ENCODE measurements at regions of chr9 and their contacts with region 1.

Region 1: GRCh38 chr9:115591584-115591984 is 473.6 kb upstream of the TNC start:
- DNase-seq: peak; percentile 5
- ATAC-seq: peak; percentile 66
- H3K4me3 ChIP-seq: no peak overlapping the region
- H3K27ac ChIP-seq: no peak overlapping the region
- H3K4me1 ChIP-seq: no peaks in the 10 kb centered on the region
- H3K27me3 ChIP-seq: no peaks in the 10 kb centered on the region
- CTCF ChIP-seq: peak; percentile 62 to 65 (median 65)
- EP300 ChIP-seq: no peak
- POLR2A ChIP-seq: no peak
- RAD21 ChIP-seq: peak; percentile 69

Region 2: DNA sequence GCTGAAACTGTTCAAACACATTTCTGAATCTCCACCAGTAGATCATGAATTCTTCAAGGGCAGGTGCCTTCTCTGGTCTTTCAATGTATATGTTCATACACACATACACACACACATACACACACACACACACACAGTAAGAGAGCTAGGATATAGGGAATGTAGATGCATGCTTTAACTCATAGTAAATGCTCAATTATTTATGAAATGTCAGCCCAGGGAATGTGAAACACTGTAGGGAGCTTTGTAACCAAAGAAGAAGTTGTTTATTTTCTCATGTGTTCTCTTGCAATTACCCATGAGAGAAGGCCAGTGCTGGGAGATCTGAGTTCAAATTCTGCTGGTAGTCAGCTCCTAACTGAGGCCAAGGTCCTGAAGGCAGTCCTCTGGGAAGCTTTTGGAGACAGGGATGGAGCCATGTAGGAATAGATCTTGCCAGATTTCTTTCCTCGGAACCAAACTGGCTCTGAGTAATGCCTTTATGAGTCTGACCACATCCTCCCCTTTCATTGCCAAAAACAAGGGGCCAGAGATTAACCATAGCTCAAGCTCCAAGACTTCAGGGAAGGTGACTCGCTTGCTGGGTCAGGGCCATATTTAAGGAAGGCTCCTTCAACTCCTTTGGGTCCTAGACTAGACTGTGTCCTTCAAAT is 13.4 kb after region 1 on chr9:
- CTCF ChIA-PET with region 1: interaction called, 26 read pairs
- POLR2A ChIA-PET with region 1: no interaction called
- RAD21 ChIA-PET with region 1: interaction called, 4 read pairs
- SMC1A ChIA-PET with region 1: interaction called, 4 read pairs
- in situ Hi-C with region 1: no loop called
- intact Hi-C with region 1: no loop called
- DNase-seq: no peak
- ATAC-seq: no peak
- H3K4me3 ChIP-seq: no peak overlapping the region
- H3K27ac ChIP-seq: no peak overlapping the region
- H3K4me1 ChIP-seq: no peaks in the 10 kb centered on the region
- H3K27me3 ChIP-seq: no peaks in the 10 kb centered on the region
- CTCF ChIP-seq: no peak
- EP300 ChIP-seq: no peak
- POLR2A ChIP-seq: no peak
- RAD21 ChIP-seq: no peak

Region 3: DNA sequence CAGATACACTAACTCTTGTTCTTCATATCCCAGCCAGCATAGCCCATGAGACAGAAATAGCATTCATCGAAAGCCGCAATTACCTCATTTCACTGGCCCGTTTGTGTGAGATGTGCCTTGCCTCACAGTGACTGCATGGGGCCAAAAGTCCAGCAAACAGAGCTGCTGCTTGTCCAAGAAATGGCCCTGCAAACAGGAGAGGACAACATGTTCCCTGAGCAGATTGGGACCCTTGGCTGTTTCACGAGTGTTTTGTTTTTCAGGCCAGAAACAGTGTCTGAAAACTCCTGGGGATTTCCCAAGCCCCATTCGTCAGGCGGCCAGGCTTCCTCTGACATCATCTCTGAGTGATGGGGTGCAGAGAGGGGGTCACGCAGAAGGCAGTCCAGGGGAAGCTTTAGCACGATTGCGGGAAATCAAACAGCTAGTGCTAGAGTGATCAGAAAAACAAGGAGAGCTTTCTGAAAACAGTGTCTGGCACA is 58.4 kb after region 1 on chr9:
- CTCF ChIA-PET with region 1: no interaction called
- POLR2A ChIA-PET with region 1: no interaction called
- RAD21 ChIA-PET with region 1: no interaction called
- SMC1A ChIA-PET with region 1: no interaction called
- in situ Hi-C with region 1: no loop called
- intact Hi-C with region 1: no loop called
- DNase-seq: no peak
- ATAC-seq: peak; percentile 72
- H3K4me3 ChIP-seq: no peak overlapping the region
- H3K27ac ChIP-seq: no peak overlapping the region
- H3K4me1 ChIP-seq: no peaks in the 10 kb centered on the region; the same call in 1 of the 2 replicates
- H3K27me3 ChIP-seq: no peaks in the 10 kb centered on the region
- CTCF ChIP-seq: no peak
- EP300 ChIP-seq: no peak
- POLR2A ChIP-seq: no peak
- RAD21 ChIP-seq: no peak

Region 4: GRCh38 chr9:116000748-116001329 is 409.3 kb after region 1 on chr9:
- CTCF ChIA-PET with region 1: no interaction called
- POLR2A ChIA-PET with region 1: no interaction called
- RAD21 ChIA-PET with region 1: no interaction called
- SMC1A ChIA-PET with region 1: no interaction called
- in situ Hi-C with region 1: no loop called
- intact Hi-C with region 1: loop called (anchors 10 kb)
- DNase-seq: no peak
- ATAC-seq: peak; percentile 80
- H3K4me3 ChIP-seq: no peak overlapping the region
- H3K27ac ChIP-seq: no peak overlapping the region
- H3K4me1 ChIP-seq: no peaks in the 10 kb centered on the region
- H3K27me3 ChIP-seq: no peaks in the 10 kb centered on the region
- CTCF ChIP-seq: peak in 2 of 3 experiments; percentile 40 to 48; a peak in 5 of 6 replicates
- EP300 ChIP-seq: no peak
- POLR2A ChIP-seq: no peak
- RAD21 ChIP-seq: 0 out of 2 replicates have a peak, but pooled peaks have one; percentile 16

Region 5: DNA sequence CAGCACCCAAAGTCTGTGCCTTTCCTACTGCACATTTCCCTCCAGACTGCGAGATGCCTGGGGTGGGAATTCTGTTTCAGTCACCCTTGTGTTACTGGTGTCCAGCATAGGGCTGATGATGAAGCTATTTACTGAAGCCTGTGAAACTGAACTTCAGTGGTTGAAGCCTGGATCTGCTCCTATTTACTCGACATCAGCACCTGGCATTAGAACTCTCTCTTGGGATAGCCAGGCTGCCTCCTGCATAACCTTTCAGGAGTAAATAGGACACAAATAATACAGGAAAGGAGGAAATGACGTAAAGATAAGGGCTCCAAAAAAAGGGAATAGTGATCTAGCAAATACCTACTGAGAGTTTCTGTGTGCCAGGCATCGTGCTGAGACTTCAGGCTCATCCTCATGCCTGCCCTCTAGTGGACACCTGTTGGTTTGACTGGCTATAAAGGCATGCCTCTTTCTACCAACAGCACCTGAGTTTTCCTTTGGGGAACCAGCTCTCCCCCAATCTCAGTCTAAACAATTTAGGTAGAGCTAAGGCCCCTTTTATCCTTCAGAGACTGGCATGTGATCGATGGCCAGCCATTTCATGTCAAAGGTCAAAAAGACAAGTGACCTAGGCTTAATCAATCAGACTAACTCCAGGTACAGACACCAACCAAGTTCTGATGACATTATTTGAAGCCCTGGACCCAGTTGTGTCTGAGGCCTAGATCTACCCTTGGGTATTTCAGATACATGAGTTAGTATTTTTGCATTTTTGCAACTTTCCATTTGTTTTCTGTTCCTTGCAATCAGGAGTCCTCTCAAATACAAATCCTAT is 903.4 kb after region 1 on chr9:
- CTCF ChIA-PET with region 1: no interaction called
- POLR2A ChIA-PET with region 1: no interaction called
- RAD21 ChIA-PET with region 1: no interaction called
- SMC1A ChIA-PET with region 1: interaction called, 4 read pairs
- in situ Hi-C with region 1: no loop called
- intact Hi-C with region 1: loop called (anchors 5 kb)
- DNase-seq: no peak
- ATAC-seq: peak; percentile 82
- H3K4me3 ChIP-seq: no peak overlapping the region
- H3K27ac ChIP-seq: no peak overlapping the region
- H3K4me1 ChIP-seq: no peaks in the 10 kb centered on the region
- H3K27me3 ChIP-seq: no peaks in the 10 kb centered on the region
- CTCF ChIP-seq: peak; percentile 60 to 79 (median 77)
- EP300 ChIP-seq: no peak
- POLR2A ChIP-seq: no peak
- RAD21 ChIP-seq: peak; percentile 55

Region 6: GRCh38 chr9:116646661-116647512 is 1055.3 kb after region 1 on chr9:
- CTCF ChIA-PET with region 1: interaction called, 9 read pairs
- POLR2A ChIA-PET with region 1: no interaction called
- RAD21 ChIA-PET with region 1: no interaction called
- SMC1A ChIA-PET with region 1: interaction called, 3 read pairs
- in situ Hi-C with region 1: loop called (anchors 5 kb)
- intact Hi-C with region 1: loop called (anchors 5 kb)
- DNase-seq: no peak
- ATAC-seq: peak; percentile 75
- H3K4me3 ChIP-seq: no peak overlapping the region
- H3K27ac ChIP-seq: no peak overlapping the region
- H3K4me1 ChIP-seq: no peaks in the 10 kb centered on the region
- H3K27me3 ChIP-seq: no peaks in the 10 kb centered on the region
- CTCF ChIP-seq: peak; percentile 46 to 57 (median 49); a peak in 5 of 6 replicates
- EP300 ChIP-seq: no peak
- POLR2A ChIP-seq: no peak
- RAD21 ChIP-seq: peak; percentile 68

Region 7: GRCh38 chr9:116860509-116861120 is 1269.0 kb after region 1 on chr9:
- CTCF ChIA-PET with region 1: interaction called, 10 read pairs
- POLR2A ChIA-PET with region 1: no interaction called
- RAD21 ChIA-PET with region 1: no interaction called
- SMC1A ChIA-PET with region 1: no interaction called
- in situ Hi-C with region 1: no loop called
- intact Hi-C with region 1: no loop called
- DNase-seq: no peak
- ATAC-seq: peak; percentile 78
- H3K4me3 ChIP-seq: no peak overlapping the region
- H3K27ac ChIP-seq: no peak overlapping the region
- H3K4me1 ChIP-seq: no peaks in the 10 kb centered on the region
- H3K27me3 ChIP-seq: no peaks in the 10 kb centered on the region
- CTCF ChIP-seq: peak; percentile 60 to 79 (median 77)
- EP300 ChIP-seq: no peak
- POLR2A ChIP-seq: no peak
- RAD21 ChIP-seq: peak; percentile 64

Measured in GM12878 (cell line).